ENCODE measurements at regions of chr12 and their contacts with region 1.

Region 1: DNA sequence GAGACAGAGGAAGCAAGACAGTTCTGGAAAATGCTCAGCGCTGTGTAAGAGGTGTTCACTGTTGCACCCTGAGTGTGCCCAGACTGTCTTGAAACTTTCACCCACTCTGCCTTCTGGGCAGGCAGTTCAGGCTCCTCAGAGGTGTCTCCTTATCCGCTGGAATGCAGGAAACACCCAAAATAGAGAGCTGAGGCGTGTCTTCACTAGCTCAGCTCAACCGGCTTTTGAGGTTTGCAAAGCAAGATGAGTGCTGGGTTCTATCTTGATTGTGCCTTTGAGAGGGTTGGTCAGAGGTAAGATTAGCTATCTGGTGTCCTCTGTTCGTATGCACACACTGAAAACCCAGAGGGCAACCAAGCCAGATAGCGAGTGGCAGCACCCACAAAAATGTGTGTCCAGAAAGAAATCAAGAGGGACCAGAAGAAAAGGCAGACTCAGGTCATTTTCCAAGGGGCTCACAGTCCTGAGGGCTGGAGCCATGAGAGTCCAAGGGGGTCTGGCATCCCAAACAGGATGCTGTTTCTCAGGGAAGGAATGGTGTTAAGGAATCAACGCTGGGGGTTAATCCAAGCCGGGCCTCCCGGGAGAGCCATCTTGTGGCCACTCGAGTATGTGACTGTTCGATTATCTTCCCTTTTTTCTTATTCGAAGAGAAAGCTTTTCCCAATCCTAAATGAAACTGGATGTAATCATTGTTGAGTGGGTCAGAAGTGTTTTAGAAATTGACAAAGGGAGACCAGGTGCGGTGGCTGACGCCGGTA is 47.1 kb downstream of the TBX3 start:
- DNase-seq: peak; percentile 36
- ATAC-seq: peak; percentile 64
- H3K4me3 ChIP-seq: no peak overlapping the region
- H3K27ac ChIP-seq: no peak overlapping the region
- H3K4me1 ChIP-seq: no peaks in the 10 kb centered on the region
- H3K27me3 ChIP-seq: 0 out of 2 replicates have a peak, but pooled peaks cover 7% of the 10 kb centered on the region
- CTCF ChIP-seq: peak; percentile 69

Region 2: DNA sequence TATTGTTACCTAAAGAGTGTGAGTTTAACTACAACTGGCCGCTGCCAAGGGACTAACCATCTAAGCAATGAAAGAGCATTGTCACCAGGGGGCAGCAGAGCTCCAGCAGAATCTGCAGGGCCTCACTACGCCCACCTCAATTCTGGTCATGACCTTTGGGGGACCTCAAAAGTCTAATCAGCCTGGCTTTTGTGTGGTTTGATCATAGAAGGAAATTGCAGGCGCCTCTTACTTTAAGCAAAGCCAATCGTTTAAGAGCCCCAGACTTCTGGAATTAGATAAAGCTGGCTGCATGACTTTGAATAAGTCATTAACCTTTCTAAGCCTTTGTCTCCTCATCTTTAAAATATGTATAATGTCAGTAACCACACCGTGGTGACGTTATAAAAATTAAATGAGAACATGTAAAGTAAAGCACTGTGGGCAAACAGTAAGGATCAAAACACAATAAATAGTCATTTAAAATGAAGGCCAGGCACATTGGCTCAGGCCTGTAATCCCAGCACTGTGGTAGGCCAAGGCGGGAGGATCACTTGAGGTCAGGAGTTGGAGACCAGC is 11.5 kb before region 1 on chr12:
- CTCF ChIA-PET with region 1: interaction called, 19 read pairs
- POLR2A ChIA-PET with region 1: no interaction called
- intact Hi-C with region 1: no loop called
- DNase-seq: peak; percentile 74
- ATAC-seq: peak; percentile 96
- H3K4me3 ChIP-seq: no peak overlapping the region
- H3K27ac ChIP-seq: no peak overlapping the region
- H3K4me1 ChIP-seq: no peaks in the 10 kb centered on the region
- H3K27me3 ChIP-seq: peaks cover 19% of the 10 kb centered on the region; the same call in 1 of the 2 replicates
- CTCF ChIP-seq: peak; percentile 98

Region 3: GRCh38 chr12:114823724-114824123 is 186.8 kb after region 1 on chr12:
- CTCF ChIA-PET with region 1: no interaction called
- POLR2A ChIA-PET with region 1: no interaction called
- intact Hi-C with region 1: no loop called
- DNase-seq: no peak
- ATAC-seq: no peak
- H3K4me3 ChIP-seq: no peak overlapping the region
- H3K27ac ChIP-seq: no peak overlapping the region
- H3K4me1 ChIP-seq: no peaks in the 10 kb centered on the region
- H3K27me3 ChIP-seq: no peaks in the 10 kb centered on the region
- CTCF ChIP-seq: no peak